ENCODE measurements at regions of chr1 and their contacts with region 1.

Region 1: GRCh38 chr1:43946236-43947060 is at the start of gene IPO13:
- DNase-seq: peak; percentile 96
- H3K4me3 Mint-ChIP-seq: peak within 1 kb of the TSS; percentile 97
- H3K27ac Mint-ChIP-seq: peak within 1 kb of the TSS; percentile 96
- H3K4me1 Mint-ChIP-seq: peaks cover 53% of the 10 kb centered on the region
- H3K27me3 Mint-ChIP-seq: no peaks in the 10 kb centered on the region
- total RNA-seq, gene IPO13: 28.6 and 33.9 TPM in 2 replicates

Region 2: GRCh38 chr1:43529206-43529731 is 417.2 kb before region 1 on chr1:
- intact Hi-C with region 1: loop called (anchors 2 kb)
- DNase-seq: peak; percentile 64
- H3K4me3 Mint-ChIP-seq: peak overlapping the region; percentile 34
- H3K27ac Mint-ChIP-seq: no peak overlapping the region
- H3K4me1 Mint-ChIP-seq: peaks cover 21% of the 10 kb centered on the region
- H3K27me3 Mint-ChIP-seq: peaks cover 41% of the 10 kb centered on the region

Region 3: GRCh38 chr1:43763497-43763973 is 182.9 kb before region 1 on chr1:
- intact Hi-C with region 1: loop called (anchors 1 kb)
- DNase-seq: peak; percentile 25
- H3K4me3 Mint-ChIP-seq: no peak overlapping the region
- H3K27ac Mint-ChIP-seq: no peak overlapping the region
- H3K4me1 Mint-ChIP-seq: peaks cover 5% of the 10 kb centered on the region
- H3K27me3 Mint-ChIP-seq: no peaks in the 10 kb centered on the region

Region 4: DNA sequence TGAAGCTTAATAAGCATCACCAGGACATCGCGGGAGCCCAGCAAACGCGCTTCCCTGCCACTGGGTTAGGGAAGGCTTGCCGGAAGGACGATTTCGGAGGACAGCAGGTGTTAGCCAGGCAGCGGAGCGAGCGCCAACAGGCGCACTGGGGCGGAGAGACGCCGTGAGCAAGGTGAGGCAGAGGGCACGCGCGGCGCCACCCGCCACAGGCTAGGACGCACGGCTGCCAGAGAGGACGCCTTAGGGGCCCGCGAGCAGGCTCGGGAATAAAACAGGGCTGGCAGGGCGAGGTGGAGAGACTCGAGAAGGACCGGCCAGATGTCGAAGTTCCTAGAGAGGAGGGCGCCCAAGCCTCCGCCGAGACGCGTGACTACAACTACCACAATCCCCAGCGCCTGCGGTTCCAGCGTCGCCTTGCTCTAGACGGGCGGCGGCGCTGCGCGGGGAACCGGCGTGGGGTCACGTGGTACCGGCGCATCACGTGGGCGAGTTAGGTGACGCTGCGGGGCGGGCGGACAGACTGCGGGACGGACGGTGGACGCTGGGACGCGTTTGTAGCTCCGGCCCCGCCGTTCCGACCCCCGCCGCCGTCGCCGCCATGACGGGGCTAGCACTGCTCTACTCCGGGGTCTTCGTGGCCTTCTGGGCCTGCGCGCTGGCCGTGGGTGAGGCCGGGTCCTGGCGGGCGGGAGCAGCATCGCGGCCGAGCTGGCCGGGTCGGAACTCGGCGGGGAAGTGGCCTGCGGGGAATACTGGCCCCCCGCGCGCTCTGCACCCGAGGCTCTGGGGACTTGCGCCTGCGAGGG is 28.2 kb after region 1 on chr1 and contains the start of gene ATP6V0B:
- intact Hi-C with region 1: loop called (anchors 1 kb)
- DNase-seq: peak; percentile 94
- H3K4me3 Mint-ChIP-seq: peak within 1 kb of the TSS; percentile 85
- H3K27ac Mint-ChIP-seq: peak within 1 kb of the TSS; percentile 89
- H3K4me1 Mint-ChIP-seq: peaks cover 60% of the 10 kb centered on the region
- H3K27me3 Mint-ChIP-seq: peaks cover 1% of the 10 kb centered on the region
- total RNA-seq, gene ATP6V0B: 187 and 195 TPM in 2 replicates

Region 5: GRCh38 chr1:44029906-44030604 is 83.6 kb after region 1 on chr1:
- intact Hi-C with region 1: loop called (anchors 1 kb)
- DNase-seq: peak; percentile 86
- H3K4me3 Mint-ChIP-seq: peak overlapping the region; percentile 90
- H3K27ac Mint-ChIP-seq: peak overlapping the region; percentile 92
- H3K4me1 Mint-ChIP-seq: peaks cover 30% of the 10 kb centered on the region
- H3K27me3 Mint-ChIP-seq: peaks cover 2% of the 10 kb centered on the region

Region 6: DNA sequence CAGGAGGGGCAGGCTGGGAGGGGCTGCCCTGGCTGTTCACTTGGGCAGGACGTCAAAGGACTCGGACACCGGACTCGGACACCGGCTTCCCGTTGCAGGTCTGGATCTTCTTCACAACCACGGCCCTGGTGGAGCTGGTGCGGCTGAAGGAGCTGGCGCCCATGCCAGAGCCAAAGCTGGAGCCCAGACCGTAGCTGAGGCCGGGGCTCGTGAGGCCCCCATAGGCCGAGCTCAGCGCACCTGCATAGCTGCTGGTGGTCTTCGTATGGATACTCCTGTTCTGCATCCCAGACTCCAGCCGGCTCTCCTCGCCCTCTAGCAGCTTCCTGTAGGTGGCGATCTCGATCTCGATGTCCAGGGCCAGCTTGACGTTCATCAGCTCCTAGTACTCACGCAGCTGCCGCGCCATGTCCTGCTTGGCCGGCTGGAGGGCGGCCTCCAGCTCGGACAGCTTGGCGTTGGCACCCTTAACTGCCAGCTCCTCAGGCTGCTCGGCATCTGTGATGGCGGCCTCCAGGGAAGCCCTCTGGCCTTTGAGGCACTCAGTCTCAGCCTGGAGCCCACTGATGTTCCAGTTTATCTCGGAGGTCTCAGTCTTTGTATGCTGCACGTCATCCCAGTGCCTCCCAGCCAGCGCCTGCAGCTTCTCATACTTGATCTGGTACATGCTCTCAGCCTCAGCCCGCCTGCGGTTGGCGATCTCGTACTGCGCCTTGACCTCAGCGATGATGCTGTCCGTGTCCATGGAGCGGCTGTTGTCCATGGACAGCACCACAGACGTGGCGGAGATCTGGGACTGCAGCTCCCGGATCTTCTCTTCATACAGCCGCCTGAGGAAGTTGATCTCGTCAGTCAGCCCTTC is 157.1 kb after region 1 on chr1:
- intact Hi-C with region 1: no loop called
- DNase-seq: no peak
- H3K4me3 Mint-ChIP-seq: no peak overlapping the region
- H3K27ac Mint-ChIP-seq: no peak overlapping the region
- H3K4me1 Mint-ChIP-seq: no peaks in the 10 kb centered on the region
- H3K27me3 Mint-ChIP-seq: peaks cover 14% of the 10 kb centered on the region

Region 7: DNA sequence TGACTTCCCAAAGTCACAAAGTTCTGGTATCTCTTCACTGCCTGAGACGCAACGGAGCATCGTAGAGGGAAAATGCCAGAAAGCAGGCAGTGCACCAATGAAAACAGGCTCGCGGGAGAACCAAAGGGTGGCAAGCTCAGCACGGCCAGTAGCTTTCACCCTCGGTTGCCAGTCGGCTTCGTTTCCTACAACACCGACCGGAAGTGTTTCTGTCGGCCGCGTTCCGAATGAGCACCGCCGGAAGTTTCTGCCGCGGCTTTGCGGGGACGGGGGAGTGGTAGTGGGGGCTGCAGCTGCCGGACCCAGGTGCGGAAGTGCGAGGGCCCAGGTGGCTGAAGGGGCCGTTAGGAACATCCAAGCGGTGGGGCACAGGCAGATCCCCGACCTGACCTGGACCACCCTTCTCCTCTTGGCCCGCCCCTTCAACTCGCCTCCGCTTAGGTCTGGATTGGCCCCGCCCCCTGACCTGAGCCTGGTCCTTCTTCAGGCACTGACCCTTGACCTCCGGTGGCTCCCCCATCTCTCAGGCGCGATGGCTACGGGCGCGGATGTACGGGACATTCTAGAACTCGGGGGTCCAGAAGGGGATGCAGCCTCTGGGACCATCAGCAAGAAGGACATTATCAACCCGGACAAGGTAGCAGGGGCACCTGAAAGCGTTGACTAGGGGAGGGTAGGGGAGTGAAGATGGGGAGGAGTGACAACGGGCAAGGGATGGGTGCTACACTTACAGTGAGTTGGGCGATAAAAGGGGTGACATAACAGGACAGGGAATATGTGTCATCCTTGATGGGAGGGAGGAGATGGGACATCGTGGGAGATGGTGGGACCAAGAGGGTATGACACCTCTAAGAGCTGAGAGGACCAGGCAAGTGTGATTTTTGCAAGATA is 267.0 kb after region 1 on chr1 and contains the start of gene DMAP1:
- intact Hi-C with region 1: loop called (anchors 1 kb)
- DNase-seq: peak; percentile 83
- H3K4me3 Mint-ChIP-seq: peak within 1 kb of the TSS; percentile 90
- H3K27ac Mint-ChIP-seq: peak within 1 kb of the TSS; percentile 91
- H3K4me1 Mint-ChIP-seq: peaks cover 39% of the 10 kb centered on the region
- H3K27me3 Mint-ChIP-seq: peaks cover 8% of the 10 kb centered on the region
- total RNA-seq, gene DMAP1: 37.4 and 38.1 TPM in 2 replicates

Measured in activated T-helper 1 cell treated with anti-CD3 and anti-CD28 coated beads, Interleukin-12 subunit alpha, Interleukin-12 subunit beta, Interleukin-2, Interleukin-4 antibody, amounts not matched to agents 30 ng/mL and 10 ng/mL and 1 ng/mL, durations not matched to agents 14 hours and 24 hours and 36 hours (primary cell).